AG04450 (cell line): ENCODE measurements at regions of chr1 and their contacts with region 1.

Region 1: DNA sequence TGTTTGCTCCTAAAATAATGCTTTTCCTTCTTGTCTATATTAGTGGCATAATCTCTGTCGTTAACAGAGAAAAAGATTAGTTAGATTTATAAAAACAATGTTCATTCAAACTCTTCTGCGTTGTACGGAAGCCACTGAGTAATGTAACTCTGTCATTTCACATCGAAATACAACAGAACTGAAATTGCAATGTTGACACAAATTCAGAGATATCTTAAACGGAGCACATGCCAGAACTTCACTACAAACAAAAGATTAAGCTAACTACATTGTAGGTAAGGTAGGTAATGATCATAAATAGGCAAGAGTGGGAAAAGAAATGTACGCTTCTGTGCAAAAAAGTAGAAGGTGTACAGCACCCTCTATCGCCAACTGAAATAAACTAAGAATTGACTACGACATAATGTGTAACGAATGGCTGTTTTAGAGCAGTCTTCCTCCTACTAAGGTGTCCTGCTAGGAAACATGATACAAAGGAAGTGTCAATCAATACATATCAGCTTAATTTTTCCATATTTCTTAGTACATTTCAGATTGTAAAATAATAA is 56.6 kb downstream of the PCNX2 start:
- DNase-seq: no peak
- H3K4me3 ChIP-seq: no peak overlapping the region
- H3K27ac ChIP-seq: no peak overlapping the region
- H3K27me3 ChIP-seq: no peaks in the 10 kb centered on the region
- CTCF ChIP-seq: 0 out of 2 replicates have a peak, but pooled peaks have one; percentile 18

Region 2: GRCh38 chr1:233180641-233181364 is 58.2 kb before region 1 on chr1:
- CTCF ChIA-PET with region 1: no interaction called
- POLR2A ChIA-PET with region 1: interaction called, 16 read pairs
- DNase-seq: no peak
- H3K4me3 ChIP-seq: no peak overlapping the region
- H3K27ac ChIP-seq: no peak overlapping the region
- H3K27me3 ChIP-seq: no peaks in the 10 kb centered on the region
- CTCF ChIP-seq: no peak

Region 3: DNA sequence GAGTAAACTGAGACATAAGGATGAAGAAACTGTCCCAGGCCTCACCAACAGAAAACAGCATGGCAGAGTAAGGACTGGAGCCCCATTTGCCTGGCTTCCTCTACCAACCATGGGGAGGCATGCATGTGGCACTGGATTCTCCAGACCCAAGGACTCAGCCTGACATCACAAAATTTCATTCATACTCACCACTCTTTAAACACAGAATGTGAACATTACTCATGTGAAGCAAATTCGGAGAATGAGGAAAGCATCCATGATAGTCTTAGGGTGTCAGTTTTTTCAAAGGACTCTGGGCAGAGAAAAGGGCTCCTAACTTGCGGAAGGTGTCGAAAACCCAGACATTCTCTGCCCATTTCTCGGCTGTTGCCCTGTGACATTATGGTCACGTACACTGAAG is 27.4 kb before region 1 on chr1:
- CTCF ChIA-PET with region 1: no interaction called
- POLR2A ChIA-PET with region 1: no interaction called
- DNase-seq: no peak
- H3K4me3 ChIP-seq: no peak overlapping the region
- H3K27ac ChIP-seq: no peak overlapping the region
- H3K27me3 ChIP-seq: no peaks in the 10 kb centered on the region
- CTCF ChIP-seq: no peak

Region 4: DNA sequence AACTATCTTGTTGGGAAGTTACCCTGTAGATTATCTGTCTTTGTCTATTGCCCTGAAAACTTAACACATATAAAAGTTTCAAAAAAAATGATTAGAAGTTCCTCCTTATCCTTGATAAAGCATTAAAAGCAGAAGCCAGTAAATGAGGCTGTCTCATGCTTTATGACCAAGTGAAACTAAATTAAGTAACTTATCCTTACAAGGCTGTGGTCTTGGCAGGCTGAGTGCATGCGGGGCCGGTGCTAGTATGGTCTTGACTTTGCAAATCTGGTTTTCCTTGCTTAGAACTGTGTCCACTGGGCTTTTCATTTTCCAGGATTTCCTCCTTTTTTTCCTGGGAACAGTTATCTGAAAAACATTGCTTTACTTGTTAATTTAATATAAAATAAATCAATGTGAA is 13.5 kb after region 1 on chr1:
- CTCF ChIA-PET with region 1: no interaction called
- POLR2A ChIA-PET with region 1: no interaction called
- DNase-seq: no peak
- H3K4me3 ChIP-seq: no peak overlapping the region
- H3K27ac ChIP-seq: no peak overlapping the region
- H3K27me3 ChIP-seq: no peaks in the 10 kb centered on the region
- CTCF ChIP-seq: no peak